ENCODE measurements at regions of chr3 and their contacts with region 1.

Region 1: GRCh38 chr3:150495563-150496168 is 50.6 kb downstream of the SERP1 start:
- DNase-seq: no peak
- ATAC-seq: peak; percentile 66
- H3K4me3 ChIP-seq: no peak overlapping the region
- H3K27ac ChIP-seq: no peak overlapping the region
- H3K4me1 ChIP-seq: no peaks in the 10 kb centered on the region
- H3K27me3 ChIP-seq: no peaks in the 10 kb centered on the region

Region 2: GRCh38 chr3:149936812-149937233 is 558.8 kb before region 1 on chr3:
- intact Hi-C with region 1: loop called in 1 of 2 experiments (anchors 10 kb)
- DNase-seq: peak in 1 of 2 donors; percentile 57
- ATAC-seq: peak; percentile 75
- H3K4me3 ChIP-seq: no peak overlapping the region
- H3K27ac ChIP-seq: peak overlapping the region in 1 of 2 donors; percentile 8
- H3K4me1 ChIP-seq: peaks cover 5 to 8% of the 10 kb centered on the region in 2 donors
- H3K27me3 ChIP-seq: no peaks in the 10 kb centered on the region

Region 3: DNA sequence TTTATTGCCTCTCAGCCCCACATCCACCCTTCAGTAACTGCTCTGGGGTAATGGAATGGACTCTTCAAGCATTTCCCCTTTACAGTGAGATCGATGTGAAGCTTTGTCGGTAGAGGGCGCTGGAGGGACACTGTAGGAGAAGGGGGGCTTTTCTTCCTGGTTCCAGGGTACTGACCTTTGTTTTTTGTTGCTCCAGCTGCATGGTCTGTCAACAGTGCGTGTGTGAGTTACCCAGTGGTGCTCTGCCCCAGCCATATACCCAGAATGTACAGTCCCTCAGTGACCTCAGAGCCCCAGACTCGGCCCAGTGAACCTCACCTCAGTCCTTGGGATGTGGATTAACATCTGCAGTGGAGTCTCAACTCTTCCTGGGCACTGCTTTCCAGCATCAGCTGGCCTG is 267.8 kb before region 1 on chr3:
- intact Hi-C with region 1: loop called (anchors 5 kb)
- DNase-seq: peak in 1 of 2 donors; percentile 64
- ATAC-seq: no peak
- H3K4me3 ChIP-seq: no peak overlapping the region
- H3K27ac ChIP-seq: no peak overlapping the region
- H3K4me1 ChIP-seq: no peaks in the 10 kb centered on the region
- H3K27me3 ChIP-seq: no peaks in the 10 kb centered on the region

Region 4: GRCh38 chr3:150232992-150233451 is 262.6 kb before region 1 on chr3:
- intact Hi-C with region 1: loop called (anchors 5 kb)
- DNase-seq: no peak
- ATAC-seq: no peak
- H3K4me3 ChIP-seq: no peak overlapping the region
- H3K27ac ChIP-seq: peak overlapping the region in 1 of 2 donors; percentile 30
- H3K4me1 ChIP-seq: peaks cover 0 to 14% of the 10 kb centered on the region in 2 donors
- H3K27me3 ChIP-seq: no peaks in the 10 kb centered on the region

Region 5: DNA sequence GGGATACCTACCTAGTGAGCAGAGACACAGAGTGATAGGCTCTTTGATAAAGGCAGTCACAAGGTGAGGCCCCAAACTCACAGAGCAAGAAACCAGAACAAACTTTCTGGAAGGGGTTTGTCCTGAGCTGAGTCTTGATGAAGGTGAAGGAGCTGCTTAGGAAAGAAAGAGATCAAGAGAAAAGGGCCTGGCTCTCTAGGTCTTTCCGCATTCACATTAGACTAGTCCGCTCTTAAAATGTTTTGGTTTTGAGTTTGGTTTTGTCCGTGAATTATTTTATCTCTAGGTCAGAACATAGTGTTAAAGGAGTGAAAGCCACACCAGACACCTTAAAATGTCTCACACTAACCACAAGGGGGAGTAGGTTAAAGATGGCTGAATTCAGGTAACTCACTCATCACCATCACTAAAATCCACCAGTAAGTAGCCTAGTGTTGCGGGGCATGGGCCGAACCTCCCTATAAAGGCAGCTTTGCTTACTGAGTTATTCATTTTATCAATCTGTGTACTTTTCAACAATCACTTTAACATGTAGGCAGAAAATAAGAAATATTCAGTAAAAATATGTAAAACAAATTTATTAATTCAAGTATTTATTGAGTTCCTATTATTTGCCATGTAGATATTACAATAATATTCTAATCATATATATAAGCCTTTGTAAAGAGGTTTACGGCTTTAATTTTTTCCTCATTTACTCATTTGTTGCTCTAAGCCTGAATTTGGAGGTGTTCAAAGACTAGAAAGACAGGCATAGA is 209.1 kb before region 1 on chr3:
- intact Hi-C with region 1: loop called (anchors 5 kb)
- DNase-seq: no peak
- ATAC-seq: no peak
- H3K4me3 ChIP-seq: no peak overlapping the region
- H3K27ac ChIP-seq: no peak overlapping the region
- H3K4me1 ChIP-seq: no peaks in the 10 kb centered on the region
- H3K27me3 ChIP-seq: no peaks in the 10 kb centered on the region

Region 6: GRCh38 chr3:150449169-150449721 is 46.4 kb before region 1 on chr3:
- intact Hi-C with region 1: no loop called
- DNase-seq: no peak
- ATAC-seq: no peak
- H3K4me3 ChIP-seq: no peak overlapping the region
- H3K27ac ChIP-seq: no peak overlapping the region
- H3K4me1 ChIP-seq: peaks cover 1 to 5% of the 10 kb centered on the region in 2 donors
- H3K27me3 ChIP-seq: no peaks in the 10 kb centered on the region

Measured in aorta (tissue), 5 donors.